Activated B cell treated with CpG ODN at 0.5 μM for 24 hours (primary cell): ENCODE measurements at regions of chr4 and their contacts with region 1.

Region 1: GRCh38 chr4:170259631-170260153 is 169.9 kb upstream of the AADAT start:
- DNase-seq: no peak
- ATAC-seq: peak; percentile 54
- H3K4me3 Mint-ChIP-seq: no peak overlapping the region
- H3K27ac Mint-ChIP-seq: no peak overlapping the region
- H3K4me1 Mint-ChIP-seq: peaks cover 4% of the 10 kb centered on the region
- H3K27me3 Mint-ChIP-seq: no peaks in the 10 kb centered on the region
- CTCF ChIP-seq: no peak

Region 2: GRCh38 chr4:170138580-170139194 is 121.0 kb before region 1 on chr4:
- CTCF ChIA-PET with region 1: interaction called, 3 read pairs
- POLR2A ChIA-PET with region 1: no interaction called
- intact Hi-C with region 1: loop called (anchors 1 kb)
- DNase-seq: peak; percentile 31
- ATAC-seq: peak; percentile 47
- H3K4me3 Mint-ChIP-seq: no peak overlapping the region
- H3K27ac Mint-ChIP-seq: no peak overlapping the region
- H3K4me1 Mint-ChIP-seq: no peaks in the 10 kb centered on the region
- H3K27me3 Mint-ChIP-seq: peaks cover 2% of the 10 kb centered on the region
- CTCF ChIP-seq: no peak

Region 3: DNA sequence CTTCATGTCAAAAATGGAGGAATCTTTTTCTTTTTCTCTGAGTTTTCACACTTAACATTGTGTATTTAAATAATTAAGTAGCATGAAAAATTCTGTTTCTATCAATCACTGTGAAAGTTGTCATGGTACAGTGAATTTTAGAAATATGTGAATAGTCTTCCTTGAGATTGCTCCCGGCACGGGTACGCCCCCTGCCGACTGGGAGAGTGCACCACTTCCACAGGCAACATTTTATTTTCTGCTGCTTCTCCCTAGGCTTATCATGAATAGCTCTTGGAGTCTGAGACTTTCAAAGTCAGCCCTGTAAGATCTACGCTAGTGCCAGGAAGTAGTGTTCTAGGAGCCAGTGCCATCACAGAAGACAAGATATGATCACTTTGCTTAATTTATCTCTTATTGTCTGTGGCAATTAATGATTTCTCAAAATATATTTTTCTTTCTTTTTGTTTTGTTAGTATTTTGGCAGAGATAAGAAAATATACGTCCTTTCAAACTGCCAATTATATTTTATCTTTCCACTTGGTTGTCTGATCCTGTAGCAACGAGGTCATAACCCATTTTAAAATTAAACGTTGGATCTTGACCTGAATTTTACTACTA is 593.8 kb after region 1 on chr4:
- CTCF ChIA-PET with region 1: no interaction called
- POLR2A ChIA-PET with region 1: no interaction called
- intact Hi-C with region 1: loop called (anchors 1 kb)
- DNase-seq: no peak
- ATAC-seq: no peak
- H3K4me3 Mint-ChIP-seq: no peak overlapping the region
- H3K27ac Mint-ChIP-seq: no peak overlapping the region
- H3K4me1 Mint-ChIP-seq: no peaks in the 10 kb centered on the region
- H3K27me3 Mint-ChIP-seq: no peaks in the 10 kb centered on the region
- CTCF ChIP-seq: peak; percentile 30

Region 4: GRCh38 chr4:171785388-171785787 is 1525.7 kb after region 1 on chr4:
- CTCF ChIA-PET with region 1: no interaction called
- POLR2A ChIA-PET with region 1: no interaction called
- intact Hi-C with region 1: loop called (anchors 10 kb)
- DNase-seq: no peak
- ATAC-seq: no peak
- H3K4me3 Mint-ChIP-seq: no peak overlapping the region
- H3K27ac Mint-ChIP-seq: no peak overlapping the region
- H3K4me1 Mint-ChIP-seq: peaks cover 3% of the 10 kb centered on the region
- H3K27me3 Mint-ChIP-seq: no peaks in the 10 kb centered on the region
- CTCF ChIP-seq: no peak

Region 5: GRCh38 chr4:172035562-172035961 is 1775.9 kb after region 1 on chr4:
- CTCF ChIA-PET with region 1: no interaction called
- POLR2A ChIA-PET with region 1: no interaction called
- intact Hi-C with region 1: loop called (anchors 10 kb)
- DNase-seq: no peak
- ATAC-seq: no peak
- H3K4me3 Mint-ChIP-seq: no peak overlapping the region
- H3K27ac Mint-ChIP-seq: no peak overlapping the region
- H3K4me1 Mint-ChIP-seq: no peaks in the 10 kb centered on the region
- H3K27me3 Mint-ChIP-seq: no peaks in the 10 kb centered on the region
- CTCF ChIP-seq: no peak